Activated CD4-positive, alpha-beta T cell treated with anti-CD3 and anti-CD28 coated beads for 36 hours (primary cell): ENCODE measurements at regions of chr21 and their contacts with region 1.

Region 1: DNA sequence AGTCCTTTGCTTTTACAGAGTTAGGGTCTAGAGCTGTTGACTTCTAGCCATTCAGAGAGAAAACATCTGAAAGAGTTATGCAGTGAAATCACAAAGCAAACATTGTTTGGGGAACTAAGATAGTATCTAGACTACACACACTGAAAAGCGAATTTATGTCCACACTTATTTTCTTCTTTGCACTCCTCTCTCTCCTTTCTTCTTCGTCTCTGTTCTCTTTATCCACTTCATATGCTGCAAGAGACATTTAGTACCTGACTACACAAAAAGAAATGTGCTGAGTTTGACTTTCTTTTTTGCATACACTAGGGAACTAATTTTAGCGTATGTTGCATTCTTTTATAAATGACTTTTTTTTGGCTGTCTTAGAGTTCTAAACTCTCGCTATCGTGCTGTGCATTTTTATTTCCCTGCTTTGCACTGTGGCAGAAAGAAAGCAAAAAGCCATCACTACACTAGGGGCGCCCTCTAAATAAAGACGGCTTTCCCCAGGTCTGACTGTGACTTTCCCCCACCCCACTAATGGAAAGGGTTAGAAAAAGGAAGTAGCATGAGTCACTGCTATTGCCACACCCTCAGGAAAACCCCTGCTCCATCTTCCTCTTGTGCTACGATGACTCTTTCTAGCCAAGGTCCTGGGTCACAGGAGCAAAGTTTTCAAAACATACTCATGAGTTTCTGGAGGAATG is 65.7 kb downstream of the MAP3K7CL start:
- DNase-seq: peak; percentile 85
- ATAC-seq: peak; percentile 97
- H3K4me3 Mint-ChIP-seq: peak overlapping the region; percentile 64
- H3K27ac Mint-ChIP-seq: peak overlapping the region; percentile 93
- H3K4me1 Mint-ChIP-seq: peaks cover 34% of the 10 kb centered on the region
- H3K27me3 Mint-ChIP-seq: peaks cover 2% of the 10 kb centered on the region

Region 2: DNA sequence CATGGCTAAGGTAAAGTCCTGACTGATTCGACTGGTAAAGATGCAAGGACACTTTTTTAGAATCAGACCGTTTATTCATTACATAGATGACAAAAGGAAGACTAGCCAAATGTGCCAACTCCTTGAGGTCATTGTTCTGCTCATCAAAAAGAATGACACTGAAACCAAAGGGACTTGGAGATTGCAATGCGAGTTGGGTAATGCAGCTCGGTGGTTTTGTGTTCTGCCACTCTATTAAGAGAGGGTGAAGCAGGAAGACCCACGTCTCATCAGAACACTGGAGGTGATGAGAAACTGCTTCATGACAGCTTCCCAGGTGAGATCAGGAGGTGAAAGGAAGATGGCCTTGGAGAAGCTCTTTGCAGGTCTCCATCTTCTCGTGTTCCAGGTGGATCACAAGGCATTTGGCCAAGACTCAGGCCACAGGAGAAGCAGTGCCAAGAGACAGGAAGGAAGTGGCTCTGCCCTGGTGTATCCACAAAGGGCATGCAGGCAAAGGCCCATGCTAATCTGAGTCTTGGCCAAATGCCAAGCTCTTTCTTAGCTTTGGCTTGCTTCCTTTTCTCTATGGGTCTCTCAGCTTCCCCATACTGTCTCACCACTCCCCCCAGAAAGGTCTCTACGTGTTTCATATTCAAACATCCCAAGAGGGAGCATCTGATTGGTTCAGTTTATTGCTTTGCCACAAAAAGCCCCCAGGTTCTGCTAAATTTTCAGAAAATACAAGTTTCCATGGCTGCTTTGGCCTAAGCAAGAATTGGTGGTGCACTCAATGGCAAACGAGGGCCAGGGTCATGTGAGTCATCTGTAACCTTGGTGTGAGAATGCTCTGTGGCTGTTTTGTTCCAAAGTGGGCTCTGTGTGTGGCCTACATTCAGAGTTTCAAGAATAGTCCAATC is 117.0 kb before region 1 on chr21:
- CTCF ChIA-PET with region 1: no interaction called
- POLR2A ChIA-PET with region 1: no interaction called
- intact Hi-C with region 1: loop called in 1 of 2 experiments (anchors 2 kb)
- DNase-seq: peak; percentile 61
- ATAC-seq: peak; percentile 62
- H3K4me3 Mint-ChIP-seq: peak overlapping the region; percentile 80
- H3K27ac Mint-ChIP-seq: peak overlapping the region; percentile 85
- H3K4me1 Mint-ChIP-seq: peaks cover 59% of the 10 kb centered on the region
- H3K27me3 Mint-ChIP-seq: no peaks in the 10 kb centered on the region

Region 3: DNA sequence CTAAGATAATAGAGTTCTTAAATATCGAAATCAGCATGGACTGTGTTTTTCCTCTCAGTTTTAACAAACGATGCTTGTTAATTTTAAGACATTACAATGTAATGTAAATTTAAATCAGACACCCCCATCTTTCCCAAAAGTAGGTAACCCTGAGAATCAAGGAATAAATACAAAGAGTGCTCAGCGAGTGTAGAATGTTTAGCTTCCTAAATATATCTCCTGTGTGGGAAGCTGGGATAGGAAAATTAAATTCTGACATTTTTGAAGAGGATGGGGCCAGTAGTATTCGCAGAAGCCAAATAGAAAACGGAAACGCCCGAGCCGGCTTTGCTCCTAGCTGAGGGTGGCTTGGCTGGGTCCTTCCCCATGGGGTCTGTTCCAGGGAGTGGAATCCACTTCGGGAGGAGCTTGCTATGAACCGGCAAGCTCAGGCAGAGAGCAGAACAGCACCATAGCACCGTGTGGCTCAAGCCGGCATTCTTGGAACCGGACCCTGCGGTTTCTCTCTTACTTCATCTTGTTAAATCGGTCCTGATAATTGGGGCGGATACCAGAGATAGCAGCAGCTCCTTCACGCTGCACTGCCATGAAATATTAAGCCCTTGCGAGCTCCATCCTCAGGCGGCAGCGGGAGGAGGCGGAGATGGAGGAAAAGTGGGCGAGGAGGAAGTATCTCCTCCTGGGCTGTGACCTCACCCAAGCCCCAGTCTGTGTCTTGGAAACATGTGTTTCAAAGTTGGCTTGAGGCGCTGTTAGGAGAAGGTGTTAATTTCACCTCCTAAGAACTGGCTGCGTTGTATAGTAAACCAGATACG is 40.8 kb before region 1 on chr21:
- CTCF ChIA-PET with region 1: no interaction called
- POLR2A ChIA-PET with region 1: no interaction called
- intact Hi-C with region 1: no loop called
- DNase-seq: no peak
- ATAC-seq: no peak
- H3K4me3 Mint-ChIP-seq: no peak overlapping the region
- H3K27ac Mint-ChIP-seq: no peak overlapping the region
- H3K4me1 Mint-ChIP-seq: no peaks in the 10 kb centered on the region
- H3K27me3 Mint-ChIP-seq: peaks cover 2% of the 10 kb centered on the region

Region 4: DNA sequence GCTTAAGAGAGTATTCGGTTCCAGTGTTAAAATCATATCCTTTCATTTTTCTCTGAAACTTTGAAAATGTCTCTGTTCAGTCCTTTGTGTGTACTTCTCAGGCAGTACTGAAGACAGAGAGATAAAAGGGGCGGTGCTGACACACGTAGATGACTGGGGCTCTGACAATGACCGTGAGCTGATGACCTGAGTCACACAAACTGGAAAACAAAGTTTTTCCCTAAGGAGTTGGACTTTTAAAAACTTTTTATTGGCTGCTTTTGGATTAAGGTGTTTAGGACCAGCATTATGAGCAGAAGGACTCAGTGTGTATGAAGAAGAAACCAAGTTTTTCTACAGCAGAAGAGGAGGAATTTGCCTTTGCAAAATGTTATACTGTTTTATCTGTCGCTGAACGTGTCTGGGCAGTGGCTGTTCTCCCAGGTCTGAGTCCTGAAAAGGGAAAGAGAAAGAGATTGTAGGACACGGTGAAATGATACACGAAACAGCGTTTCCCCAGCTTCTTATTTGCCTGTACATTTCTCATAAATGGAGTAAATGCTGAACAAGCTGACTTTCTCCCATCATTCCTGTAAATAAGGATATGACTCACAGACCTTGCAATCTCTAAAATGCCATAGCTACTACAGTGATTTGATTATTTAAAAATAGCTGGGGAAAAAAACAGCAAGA is 14.2 kb before region 1 on chr21:
- CTCF ChIA-PET with region 1: interaction called, 4 read pairs
- POLR2A ChIA-PET with region 1: no interaction called
- intact Hi-C with region 1: loop called in 1 of 2 experiments (anchors 1 kb)
- DNase-seq: peak; percentile 30
- ATAC-seq: peak; percentile 85
- H3K4me3 Mint-ChIP-seq: peak overlapping the region; percentile 53
- H3K27ac Mint-ChIP-seq: peak overlapping the region; percentile 90
- H3K4me1 Mint-ChIP-seq: peaks cover 17% of the 10 kb centered on the region
- H3K27me3 Mint-ChIP-seq: no peaks in the 10 kb centered on the region

Region 5: GRCh38 chr21:29208682-29209059 is 12.5 kb after region 1 on chr21:
- CTCF ChIA-PET with region 1: interaction called, 3 read pairs
- POLR2A ChIA-PET with region 1: no interaction called
- intact Hi-C with region 1: loop called (anchors 1 kb)
- DNase-seq: no peak
- ATAC-seq: peak; percentile 54
- H3K4me3 Mint-ChIP-seq: no peak overlapping the region
- H3K27ac Mint-ChIP-seq: no peak overlapping the region
- H3K4me1 Mint-ChIP-seq: peaks cover 17% of the 10 kb centered on the region
- H3K27me3 Mint-ChIP-seq: peaks cover 2% of the 10 kb centered on the region

Region 6: GRCh38 chr21:29449306-29449950 is 253.3 kb after region 1 on chr21:
- CTCF ChIA-PET with region 1: no interaction called
- POLR2A ChIA-PET with region 1: no interaction called
- intact Hi-C with region 1: loop called in 1 of 2 experiments (anchors 1 kb)
- DNase-seq: peak; percentile 23
- ATAC-seq: peak; percentile 89
- H3K4me3 Mint-ChIP-seq: peak overlapping the region; percentile 65
- H3K27ac Mint-ChIP-seq: peak overlapping the region; percentile 90
- H3K4me1 Mint-ChIP-seq: peaks cover 28% of the 10 kb centered on the region
- H3K27me3 Mint-ChIP-seq: no peaks in the 10 kb centered on the region

Region 7: DNA sequence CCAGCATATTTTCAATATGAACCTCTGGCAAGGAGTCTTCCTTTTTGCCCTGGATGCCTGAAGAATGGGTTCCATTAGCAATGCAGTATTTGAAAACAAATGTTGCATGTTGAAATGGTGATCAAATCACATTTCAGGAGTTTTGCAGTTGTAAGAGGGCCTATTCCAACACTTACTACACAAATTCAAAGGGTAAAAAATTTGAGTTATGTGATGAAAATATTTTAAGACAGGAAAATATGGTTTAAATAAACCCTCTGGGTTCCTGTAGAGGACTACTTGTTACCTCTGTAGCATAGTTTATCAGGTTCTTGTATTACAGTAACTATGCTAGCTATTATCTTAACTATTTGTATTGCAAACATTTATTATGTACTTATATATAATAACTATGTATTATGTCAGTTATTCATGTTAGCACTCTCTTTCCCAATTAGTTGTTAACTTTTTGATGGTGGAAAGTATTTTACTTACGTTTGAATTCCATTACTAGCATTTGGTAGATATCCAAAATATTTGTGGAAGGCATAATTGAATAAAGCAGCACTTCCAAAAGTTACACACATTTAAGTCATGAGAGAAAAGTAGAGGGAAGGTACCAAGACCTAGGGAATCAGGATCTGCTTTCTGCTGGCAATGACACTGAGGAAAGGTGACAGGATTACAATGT is 430.8 kb after region 1 on chr21:
- CTCF ChIA-PET with region 1: no interaction called
- POLR2A ChIA-PET with region 1: no interaction called
- intact Hi-C with region 1: no loop called
- DNase-seq: no peak
- ATAC-seq: no peak
- H3K4me3 Mint-ChIP-seq: no peak overlapping the region
- H3K27ac Mint-ChIP-seq: no peak overlapping the region
- H3K4me1 Mint-ChIP-seq: no peaks in the 10 kb centered on the region
- H3K27me3 Mint-ChIP-seq: no peaks in the 10 kb centered on the region

Region 8: DNA sequence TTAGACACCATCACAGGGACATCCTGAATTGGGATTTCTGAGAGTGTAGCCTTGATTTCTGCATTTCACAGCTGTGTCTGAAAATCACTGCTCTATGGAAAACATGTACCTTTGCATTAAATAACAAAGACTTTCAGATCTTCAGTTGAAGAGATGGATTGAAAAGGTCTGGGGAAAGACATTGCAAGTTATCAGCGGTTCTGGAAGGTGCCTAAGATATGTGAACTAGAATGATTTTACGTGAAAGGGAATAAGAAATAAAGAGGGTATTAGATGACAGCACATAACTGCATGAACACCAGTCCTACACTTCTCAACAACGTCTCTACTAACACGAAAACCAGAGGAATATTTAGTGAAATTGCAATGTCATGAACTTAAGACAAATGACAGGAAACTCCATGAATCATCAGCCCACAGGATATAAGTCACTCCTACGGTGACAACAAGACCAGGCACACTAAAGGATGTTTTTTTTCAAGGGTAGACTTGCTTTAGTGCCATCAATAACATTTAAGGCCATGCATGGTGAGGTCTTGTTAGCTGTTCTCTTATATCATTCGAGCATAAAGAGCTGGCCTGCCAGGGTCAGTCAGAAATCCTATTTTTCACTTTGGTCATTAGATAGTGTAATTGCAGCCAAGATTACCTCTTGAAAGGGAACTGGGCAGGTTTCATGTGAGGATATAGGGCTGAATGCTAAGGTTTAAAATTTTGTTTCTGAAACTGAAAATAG is 460.5 kb after region 1 on chr21:
- CTCF ChIA-PET with region 1: no interaction called
- POLR2A ChIA-PET with region 1: no interaction called
- intact Hi-C with region 1: loop called in 1 of 2 experiments (anchors 5 kb)
- DNase-seq: peak; percentile 7
- ATAC-seq: peak; percentile 98
- H3K4me3 Mint-ChIP-seq: peak overlapping the region; percentile 48
- H3K27ac Mint-ChIP-seq: peak overlapping the region; percentile 82
- H3K4me1 Mint-ChIP-seq: peaks cover 34% of the 10 kb centered on the region
- H3K27me3 Mint-ChIP-seq: peaks cover 2% of the 10 kb centered on the region